PC-9 (cell line): ENCODE measurements at regions of chr3 and their contacts with region 1.

Region 1: DNA sequence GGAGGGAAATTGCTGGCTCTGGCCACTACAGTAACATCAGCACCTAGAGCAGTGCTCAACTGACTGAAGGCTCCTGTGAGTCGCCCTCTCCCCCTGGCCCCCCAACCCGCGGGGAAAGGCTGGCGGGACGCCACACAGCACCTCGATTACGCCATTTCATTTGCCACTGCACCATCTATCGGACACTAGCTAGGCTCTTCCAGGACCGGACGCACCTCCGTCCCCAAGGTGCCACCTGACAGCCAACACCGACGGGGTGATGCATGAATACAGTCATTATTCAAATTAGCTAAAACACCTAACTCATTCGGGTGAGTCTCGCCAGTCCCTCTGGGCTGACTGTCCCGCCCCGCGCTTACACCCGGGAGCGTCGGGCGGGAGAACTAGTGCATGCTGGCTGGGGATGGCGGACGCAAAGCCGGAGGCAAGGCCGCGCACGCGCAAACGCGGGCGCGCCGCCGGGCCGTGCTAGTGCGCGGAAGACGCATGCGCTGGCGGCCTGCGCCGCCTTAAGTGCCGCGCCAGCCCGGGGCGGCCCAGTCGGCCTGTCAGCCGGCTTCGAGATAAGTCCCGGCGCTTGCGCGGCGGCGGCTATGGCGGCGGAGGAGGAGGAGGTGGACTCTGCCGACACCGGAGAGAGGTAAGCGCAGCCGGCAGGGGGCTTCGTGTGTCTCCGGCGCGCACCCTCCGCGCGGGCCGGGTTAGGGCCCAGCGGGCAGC is at the start of gene ABHD5:
- DNase-seq: peak; percentile 84 to 90
- H3K4me3 ChIP-seq: peak within 1 kb of the TSS; percentile 68
- H3K27ac ChIP-seq: peak within 1 kb of the TSS; percentile 88
- H3K4me1 ChIP-seq: peaks cover 50% of the 10 kb centered on the region
- H3K27me3 ChIP-seq: no peaks in the 10 kb centered on the region
- CTCF ChIP-seq: no peak; the same call in 1 of the 2 replicates
- total RNA-seq, gene ABHD5: 16.1 and 19.9 TPM in 2 replicates

Region 2: GRCh38 chr3:43549626-43550290 is 140.8 kb before region 1 on chr3:
- CTCF ChIA-PET with region 1: interaction called, 3 read pairs
- POLR2A ChIA-PET with region 1: no interaction called
- intact Hi-C with region 1: loop called (anchors 1 kb)
- DNase-seq: no peak
- H3K4me3 ChIP-seq: no peak overlapping the region
- H3K27ac ChIP-seq: no peak overlapping the region
- H3K4me1 ChIP-seq: no peaks in the 10 kb centered on the region
- H3K27me3 ChIP-seq: no peaks in the 10 kb centered on the region
- CTCF ChIP-seq: no peak

Region 3: GRCh38 chr3:43621656-43622432 is 68.7 kb before region 1 on chr3 and contains the start of gene ANO10:
- CTCF ChIA-PET with region 1: interaction called, 10 read pairs
- POLR2A ChIA-PET with region 1: no interaction called
- intact Hi-C with region 1: loop called (anchors 1 kb)
- DNase-seq: peak; percentile 96 to 98
- H3K4me3 ChIP-seq: peak within 1 kb of the TSS; percentile 87
- H3K27ac ChIP-seq: peak within 1 kb of the TSS; percentile 73
- H3K4me1 ChIP-seq: peaks cover 10% of the 10 kb centered on the region
- H3K27me3 ChIP-seq: no peaks in the 10 kb centered on the region
- CTCF ChIP-seq: no peak
- total RNA-seq, gene ANO10: 30.7 and 32.6 TPM in 2 replicates

Region 4: GRCh38 chr3:43742920-43743319 is 52.4 kb after region 1 on chr3:
- CTCF ChIA-PET with region 1: no interaction called
- POLR2A ChIA-PET with region 1: no interaction called
- intact Hi-C with region 1: no loop called
- DNase-seq: no peak
- H3K4me3 ChIP-seq: no peak overlapping the region
- H3K27ac ChIP-seq: no peak overlapping the region
- H3K4me1 ChIP-seq: peaks cover 12% of the 10 kb centered on the region; the same call in 1 of the 2 replicates
- H3K27me3 ChIP-seq: no peaks in the 10 kb centered on the region
- CTCF ChIP-seq: peak; percentile 46

Region 5: GRCh38 chr3:43759297-43759782 is 68.8 kb after region 1 on chr3:
- CTCF ChIA-PET with region 1: no interaction called
- POLR2A ChIA-PET with region 1: interaction called, 14 read pairs
- intact Hi-C with region 1: loop called (anchors 2 kb)
- DNase-seq: peak; percentile 52 to 60
- H3K4me3 ChIP-seq: no peak overlapping the region
- H3K27ac ChIP-seq: no peak overlapping the region
- H3K4me1 ChIP-seq: peaks cover 36% of the 10 kb centered on the region
- H3K27me3 ChIP-seq: no peaks in the 10 kb centered on the region
- CTCF ChIP-seq: no peak; the same call in 1 of the 2 replicates

Region 6: DNA sequence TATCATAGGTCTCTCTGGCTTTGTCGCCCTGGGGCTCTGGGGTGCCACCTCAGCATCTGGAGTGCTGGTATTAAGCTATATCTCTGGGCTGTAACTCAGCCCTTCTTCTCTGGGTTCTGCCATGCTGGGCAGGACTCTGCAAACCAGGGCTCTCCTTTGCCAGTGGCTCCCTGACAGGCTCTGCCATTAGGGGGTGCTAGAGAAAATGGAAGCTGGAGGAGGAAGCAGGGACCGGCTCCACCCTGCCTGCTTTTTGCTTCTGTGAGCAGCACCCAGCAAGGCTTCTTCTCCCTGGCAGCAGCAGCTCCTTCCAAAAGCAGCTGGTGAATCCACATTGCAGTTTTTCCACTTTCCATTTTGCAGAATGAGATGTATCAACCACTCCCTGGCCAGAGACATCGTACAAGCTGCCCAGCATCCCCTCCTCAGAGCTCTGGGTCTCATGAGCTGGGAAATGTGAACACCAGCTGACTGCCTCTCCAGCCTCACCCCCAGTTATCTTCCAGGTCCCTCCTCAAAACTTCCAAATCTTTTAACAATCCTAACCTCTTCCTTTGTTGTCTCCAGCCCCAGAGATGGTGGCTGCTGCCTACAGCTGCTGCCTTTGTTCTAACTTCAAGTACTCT is 165.2 kb after region 1 on chr3:
- CTCF ChIA-PET with region 1: no interaction called
- POLR2A ChIA-PET with region 1: no interaction called
- intact Hi-C with region 1: loop called (anchors 5 kb)
- DNase-seq: peak; percentile 64 to 69
- H3K4me3 ChIP-seq: no peak overlapping the region
- H3K27ac ChIP-seq: no peak overlapping the region
- H3K4me1 ChIP-seq: peaks cover 28% of the 10 kb centered on the region
- H3K27me3 ChIP-seq: no peaks in the 10 kb centered on the region
- CTCF ChIP-seq: peak; percentile 69

Region 7: GRCh38 chr3:43998836-43999727 is 308.5 kb after region 1 on chr3:
- CTCF ChIA-PET with region 1: no interaction called
- POLR2A ChIA-PET with region 1: no interaction called
- intact Hi-C with region 1: loop called (anchors 2 kb)
- DNase-seq: peak; percentile 69 to 90
- H3K4me3 ChIP-seq: peak overlapping the region; percentile 70
- H3K27ac ChIP-seq: peak overlapping the region; percentile 88
- H3K4me1 ChIP-seq: peaks cover 22% of the 10 kb centered on the region
- H3K27me3 ChIP-seq: no peaks in the 10 kb centered on the region
- CTCF ChIP-seq: no peak

Region 8: GRCh38 chr3:44045476-44046275 is 355.1 kb after region 1 on chr3:
- CTCF ChIA-PET with region 1: no interaction called
- POLR2A ChIA-PET with region 1: no interaction called
- intact Hi-C with region 1: no loop called
- DNase-seq: peak; percentile 37 to 84
- H3K4me3 ChIP-seq: no peak overlapping the region
- H3K27ac ChIP-seq: 0 out of 2 replicates have a peak overlapping the region, but pooled peaks have one; percentile 6
- H3K4me1 ChIP-seq: peaks cover 48% of the 10 kb centered on the region
- H3K27me3 ChIP-seq: no peaks in the 10 kb centered on the region
- CTCF ChIP-seq: no peak